ENCODE measurements at regions of chr4 and their contacts with region 1.

Region 1: DNA sequence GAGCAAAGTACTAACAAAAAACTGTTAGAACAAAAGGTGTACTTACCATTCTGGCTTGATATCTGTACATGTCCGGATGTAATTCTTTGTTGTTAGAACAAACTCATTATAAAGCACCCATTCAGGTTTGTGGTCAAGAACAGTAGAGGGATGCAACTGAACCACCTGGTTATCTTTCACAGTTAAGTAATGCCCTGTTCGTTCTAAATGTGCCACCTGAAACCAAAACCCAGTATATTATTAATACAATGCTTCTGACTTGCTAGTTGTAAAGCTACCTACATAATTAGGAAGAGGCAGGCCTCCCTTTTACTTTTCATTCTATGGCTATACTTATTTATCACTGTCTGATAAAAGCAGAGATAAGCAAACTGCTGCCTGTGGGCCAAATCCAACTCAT is 54.8 kb downstream of the DHX15 start:
- DNase-seq: no peak
- ATAC-seq: no peak
- H3K4me3 ChIP-seq: no peak overlapping the region
- H3K27ac ChIP-seq: no peak overlapping the region
- H3K4me1 ChIP-seq: peaks cover 3% of the 10 kb centered on the region; the same call in 1 of the 2 replicates
- H3K27me3 ChIP-seq: no peaks in the 10 kb centered on the region
- CTCF ChIP-seq: no peak
- POLR2A ChIP-seq: no peak
- RAD21 ChIP-seq: no peak

Region 2: GRCh38 chr4:24514803-24515202 is 14.8 kb before region 1 on chr4:
- CTCF ChIA-PET with region 1: interaction called, 3 read pairs
- POLR2A ChIA-PET with region 1: no interaction called
- dilution Hi-C with region 1: no loop called
- in situ Hi-C with region 1: no loop called
- intact Hi-C with region 1: loop called (anchors 1 kb)
- DNase-seq: no peak
- ATAC-seq: no peak
- H3K4me3 ChIP-seq: no peak overlapping the region
- H3K27ac ChIP-seq: no peak overlapping the region
- H3K4me1 ChIP-seq: peaks cover 5% of the 10 kb centered on the region
- H3K27me3 ChIP-seq: no peaks in the 10 kb centered on the region
- CTCF ChIP-seq: peak; percentile 22
- POLR2A ChIP-seq: no peak
- RAD21 ChIP-seq: no peak

Region 3: GRCh38 chr4:24589448-24589847 is 59.9 kb after region 1 on chr4:
- CTCF ChIA-PET with region 1: no interaction called
- POLR2A ChIA-PET with region 1: no interaction called
- dilution Hi-C with region 1: no loop called
- in situ Hi-C with region 1: no loop called
- intact Hi-C with region 1: no loop called
- DNase-seq: no peak
- ATAC-seq: no peak
- H3K4me3 ChIP-seq: no peak overlapping the region
- H3K27ac ChIP-seq: no peak overlapping the region
- H3K4me1 ChIP-seq: no peaks in the 10 kb centered on the region
- H3K27me3 ChIP-seq: peaks cover 3% of the 10 kb centered on the region; the same call in 1 of the 2 replicates
- CTCF ChIP-seq: no peak
- POLR2A ChIP-seq: no peak
- RAD21 ChIP-seq: no peak

Region 4: DNA sequence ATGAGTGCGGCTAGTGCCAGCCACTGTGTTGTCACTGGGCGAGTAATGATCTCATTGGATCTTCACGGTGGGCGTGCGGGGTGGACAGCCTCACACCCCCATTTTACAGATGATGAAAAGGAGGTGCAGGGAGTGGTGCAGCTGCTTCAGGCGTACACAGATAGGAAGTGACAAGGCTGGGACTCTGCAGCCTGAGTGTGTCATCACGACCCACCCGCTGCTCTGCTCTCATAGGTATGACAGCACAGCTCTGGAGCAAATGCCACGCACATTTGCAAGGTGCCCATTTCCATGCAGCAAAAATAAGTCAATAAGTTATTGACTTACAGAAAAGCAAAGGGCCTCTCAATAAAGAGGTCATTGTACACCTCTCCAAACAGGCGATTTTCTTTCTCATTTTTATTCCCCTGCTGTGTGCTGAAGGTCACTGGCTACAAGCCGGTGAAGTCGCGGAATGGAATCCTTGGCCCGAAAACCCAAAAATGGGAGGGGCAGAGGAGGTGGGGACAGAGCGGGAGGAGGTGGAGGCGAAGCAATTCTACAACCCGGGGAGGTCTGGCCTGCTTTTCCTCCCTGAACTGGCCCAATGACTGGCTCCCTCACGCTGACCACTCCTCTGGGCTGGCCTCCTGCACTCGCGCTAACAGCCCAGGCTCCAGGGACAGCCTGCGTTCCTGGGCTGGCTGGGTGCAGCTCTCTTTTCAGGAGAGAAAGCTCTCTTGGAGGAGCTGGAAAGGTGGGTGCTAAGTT is 265.5 kb after region 1 on chr4 and contains the start of gene SOD3:
- CTCF ChIA-PET with region 1: no interaction called
- POLR2A ChIA-PET with region 1: no interaction called
- dilution Hi-C with region 1: no loop called
- in situ Hi-C with region 1: no loop called
- intact Hi-C with region 1: no loop called
- DNase-seq: peak; percentile 86
- ATAC-seq: peak; percentile 100
- H3K4me3 ChIP-seq: peak within 1 kb of the TSS; percentile 26; the same call in 1 of the 2 replicates
- H3K27ac ChIP-seq: peak within 1 kb of the TSS; percentile 35; the same call in 1 of the 2 replicates
- H3K4me1 ChIP-seq: peaks cover 9% of the 10 kb centered on the region
- H3K27me3 ChIP-seq: no peaks in the 10 kb centered on the region; the same call in 1 of the 2 replicates
- CTCF ChIP-seq: no peak
- POLR2A ChIP-seq: no peak
- RAD21 ChIP-seq: no peak
- total RNA-seq, gene SOD3: 0.28 and 0.36 TPM in 2 replicates